GM10248 (cell line): ENCODE measurements at regions of chr6 and their contacts with region 1.

Region 1: DNA sequence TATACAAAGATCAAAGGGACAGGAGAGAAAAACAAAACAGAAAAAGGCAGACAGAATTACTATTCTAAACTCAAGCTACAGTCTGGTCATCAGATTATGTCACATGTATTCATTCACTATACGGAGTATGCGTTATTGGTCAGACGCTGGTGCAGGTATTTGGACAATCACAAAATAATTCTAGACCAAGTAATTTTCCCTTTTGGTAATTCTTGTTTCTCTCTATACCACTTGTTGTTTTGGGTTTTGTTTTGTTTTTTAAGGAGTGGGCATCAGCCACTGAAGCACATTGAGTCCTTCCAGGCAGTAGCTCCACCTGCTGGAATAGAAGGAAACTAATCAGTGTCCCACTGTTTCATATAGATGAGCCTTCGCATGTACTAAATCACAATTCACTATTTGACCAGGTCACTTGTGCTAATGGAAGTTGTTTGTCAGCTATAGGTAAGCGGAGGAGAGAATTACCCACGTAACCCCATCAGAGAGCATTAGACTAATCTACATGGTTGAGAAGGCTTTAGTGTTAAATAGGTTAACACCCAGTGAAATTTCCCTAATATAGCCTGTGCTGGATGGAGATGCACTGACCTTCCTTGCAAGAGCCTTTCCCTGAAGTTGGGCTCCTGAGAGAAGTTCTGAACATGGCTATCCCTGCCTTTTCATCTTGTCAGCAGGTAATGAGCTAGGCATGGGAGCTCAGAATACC is 77.9 kb downstream of the TNFAIP3 start:
- DNase-seq: peak; percentile 45
- CTCF ChIP-seq: peak; percentile 55

Region 2: GRCh38 chr6:137641474-137642077 is 303.4 kb before region 1 on chr6:
- CTCF ChIA-PET with region 1: no interaction called
- POLR2A ChIA-PET with region 1: no interaction called
- DNase-seq: peak; percentile 57
- CTCF ChIP-seq: peak; percentile 69

Region 3: GRCh38 chr6:137697267-137697938 is 247.5 kb before region 1 on chr6:
- CTCF ChIA-PET with region 1: interaction called, 18 read pairs
- POLR2A ChIA-PET with region 1: no interaction called
- DNase-seq: no peak
- CTCF ChIP-seq: peak; percentile 26

Region 4: DNA sequence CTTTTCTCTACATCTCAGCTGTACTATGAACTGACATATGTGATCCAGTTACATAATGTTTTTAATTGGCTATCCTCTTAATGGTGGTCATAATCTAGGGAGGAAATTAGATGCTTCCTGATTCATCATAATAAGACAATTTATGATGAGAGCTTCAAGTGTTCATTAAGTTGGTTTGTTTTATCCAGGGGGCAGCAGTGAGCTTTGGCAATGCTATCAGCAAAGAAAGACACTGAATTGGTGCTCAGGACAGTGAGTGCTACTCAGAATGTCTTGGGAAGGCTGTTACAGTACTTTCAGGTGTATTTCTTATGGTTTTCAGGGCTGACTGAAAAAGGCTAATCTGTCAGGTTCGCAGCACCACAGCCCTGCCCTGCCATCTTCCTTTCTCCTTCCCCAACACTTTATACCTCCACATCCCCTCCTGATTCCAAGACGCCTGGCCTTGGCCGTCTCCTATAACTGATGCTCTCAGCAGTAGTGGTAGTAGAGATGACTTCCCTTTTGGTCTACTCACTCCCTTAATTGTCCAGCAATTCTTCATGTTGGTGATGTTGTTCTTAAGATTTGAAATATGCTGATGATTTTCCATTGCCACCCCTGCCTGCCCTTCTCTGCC is 144.9 kb before region 1 on chr6:
- CTCF ChIA-PET with region 1: interaction called, 35 read pairs
- POLR2A ChIA-PET with region 1: no interaction called
- DNase-seq: peak; percentile 53
- CTCF ChIP-seq: peak; percentile 60

Region 5: DNA sequence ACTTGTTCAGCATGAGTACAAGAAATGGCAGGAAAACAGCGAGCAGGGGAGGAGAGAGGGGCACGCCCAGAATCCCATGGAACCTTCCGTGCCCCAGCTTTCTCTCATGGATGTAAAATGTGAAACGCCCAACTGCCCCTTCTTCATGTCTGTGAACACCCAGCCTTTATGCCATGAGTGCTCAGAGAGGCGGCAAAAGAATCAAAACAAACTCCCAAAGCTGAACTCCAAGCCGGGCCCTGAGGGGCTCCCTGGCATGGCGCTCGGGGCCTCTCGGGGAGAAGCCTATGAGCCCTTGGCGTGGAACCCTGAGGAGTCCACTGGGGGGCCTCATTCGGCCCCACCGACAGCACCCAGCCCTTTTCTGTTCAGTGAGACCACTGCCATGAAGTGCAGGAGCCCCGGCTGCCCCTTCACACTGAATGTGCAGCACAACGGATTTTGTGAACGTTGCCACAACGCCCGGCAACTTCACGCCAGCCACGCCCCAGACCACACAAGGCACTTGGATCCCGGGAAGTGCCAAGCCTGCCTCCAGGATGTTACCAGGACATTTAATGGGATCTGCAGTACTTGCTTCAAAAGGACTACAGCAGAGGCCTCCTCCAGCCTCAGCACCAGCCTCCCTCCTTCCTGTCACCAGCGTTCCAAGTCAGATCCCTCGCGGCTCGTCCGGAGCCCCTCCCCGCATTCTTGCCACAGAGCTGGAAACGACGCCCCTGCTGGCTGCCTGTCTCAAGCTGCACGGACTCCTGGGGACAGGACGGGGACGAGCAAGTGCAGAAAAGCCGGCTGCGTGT is 66.3 kb before region 1 on chr6:
- CTCF ChIA-PET with region 1: interaction called, 138 read pairs
- POLR2A ChIA-PET with region 1: no interaction called
- DNase-seq: no peak
- CTCF ChIP-seq: no peak

Region 6: DNA sequence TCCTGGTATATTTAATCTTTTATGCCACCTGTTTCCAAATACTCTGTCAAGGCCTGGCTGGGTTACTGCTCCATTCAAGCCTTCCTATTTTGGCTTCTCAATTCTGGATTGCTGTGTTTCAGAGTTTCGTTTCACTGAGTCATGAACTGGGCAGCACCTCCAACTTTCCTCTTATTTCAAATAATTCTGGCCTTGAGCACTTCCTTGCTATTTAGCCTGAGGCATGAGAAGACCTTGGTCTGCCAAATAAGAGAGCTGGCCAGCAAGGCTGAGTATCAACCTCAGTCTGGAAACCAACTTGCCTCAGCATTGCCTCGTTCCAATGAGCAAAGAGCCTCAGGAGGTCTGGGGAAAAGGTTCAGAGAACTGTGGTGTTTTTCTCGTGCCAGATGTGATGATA is 11.2 kb before region 1 on chr6:
- CTCF ChIA-PET with region 1: interaction called, 35 read pairs
- POLR2A ChIA-PET with region 1: no interaction called
- DNase-seq: no peak
- CTCF ChIP-seq: no peak

Region 7: GRCh38 chr6:137975188-137975940 is 30.4 kb after region 1 on chr6:
- CTCF ChIA-PET with region 1: interaction called, 16 read pairs
- POLR2A ChIA-PET with region 1: interaction called, 3 read pairs
- DNase-seq: peak; percentile 32
- CTCF ChIP-seq: peak; percentile 50